A549 (cell line): ENCODE measurements at regions of chr9 and their contacts with region 1.

Region 1: GRCh38 chr9:131349881-131350563 is 43.9 kb upstream of the PRRC2B start:
- DNase-seq: peak; percentile 85 to 86
- ATAC-seq: peak; percentile 97 to 98
- H3K4me3 ChIP-seq: 0 out of 3 replicates have a peak overlapping the region, but pooled peaks have one; percentile 20
- H3K27ac ChIP-seq: peak overlapping the region; percentile 23 to 69; a peak in 4 of 6 replicates
- H3K4me1 ChIP-seq: 0 out of 3 replicates have a peak, but pooled peaks cover 3% of the 10 kb centered on the region
- CTCF ChIP-seq: peak; percentile 84
- EP300 ChIP-seq: no peak
- POLR2A ChIP-seq: no peak
- RAD21 ChIP-seq: peak; percentile 91 to 92

Region 2: DNA sequence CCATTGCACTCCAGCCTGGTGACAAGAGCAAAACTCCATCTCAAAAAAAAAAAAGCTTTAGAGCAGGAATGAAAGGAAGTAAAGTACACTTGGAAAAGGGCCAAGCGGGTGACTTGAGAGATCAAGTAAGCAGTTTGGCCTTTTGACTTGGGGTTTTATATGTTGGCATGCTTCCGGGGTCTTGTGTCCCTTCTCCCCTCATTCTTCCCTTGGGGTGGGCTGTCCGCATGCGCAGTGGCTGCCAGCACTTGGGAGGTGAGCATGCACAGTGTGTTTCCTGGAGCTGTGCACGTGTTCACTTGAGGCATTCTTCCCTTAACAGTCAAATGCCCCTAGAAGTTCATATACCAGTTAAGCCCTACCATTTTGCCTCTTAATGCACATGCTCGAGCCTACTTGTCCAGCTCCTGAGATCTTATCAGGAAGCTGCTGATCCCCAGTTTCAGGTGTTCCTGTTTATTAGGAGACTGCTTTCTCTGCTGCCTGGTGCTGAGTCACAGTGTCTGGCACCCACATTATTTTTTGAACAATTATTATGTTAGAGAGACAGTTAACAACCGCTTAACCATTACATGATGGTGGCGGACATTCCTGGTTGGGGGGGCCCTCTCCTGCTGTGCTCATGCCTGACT is 11.3 kb after region 1 on chr9:
- CTCF ChIA-PET with region 1: interaction called, 33 read pairs
- POLR2A ChIA-PET with region 1: no interaction called
- DNase-seq: peak in 1 of 2 experiments; percentile 48
- ATAC-seq: peak in 1 of 2 experiments; percentile 54; a peak in 3 of 6 replicates
- H3K4me3 ChIP-seq: no peak overlapping the region
- H3K27ac ChIP-seq: peak overlapping the region; percentile 53 to 64
- H3K4me1 ChIP-seq: peaks cover 20% of the 10 kb centered on the region
- CTCF ChIP-seq: no peak
- EP300 ChIP-seq: no peak
- POLR2A ChIP-seq: no peak
- RAD21 ChIP-seq: no peak

Region 3: DNA sequence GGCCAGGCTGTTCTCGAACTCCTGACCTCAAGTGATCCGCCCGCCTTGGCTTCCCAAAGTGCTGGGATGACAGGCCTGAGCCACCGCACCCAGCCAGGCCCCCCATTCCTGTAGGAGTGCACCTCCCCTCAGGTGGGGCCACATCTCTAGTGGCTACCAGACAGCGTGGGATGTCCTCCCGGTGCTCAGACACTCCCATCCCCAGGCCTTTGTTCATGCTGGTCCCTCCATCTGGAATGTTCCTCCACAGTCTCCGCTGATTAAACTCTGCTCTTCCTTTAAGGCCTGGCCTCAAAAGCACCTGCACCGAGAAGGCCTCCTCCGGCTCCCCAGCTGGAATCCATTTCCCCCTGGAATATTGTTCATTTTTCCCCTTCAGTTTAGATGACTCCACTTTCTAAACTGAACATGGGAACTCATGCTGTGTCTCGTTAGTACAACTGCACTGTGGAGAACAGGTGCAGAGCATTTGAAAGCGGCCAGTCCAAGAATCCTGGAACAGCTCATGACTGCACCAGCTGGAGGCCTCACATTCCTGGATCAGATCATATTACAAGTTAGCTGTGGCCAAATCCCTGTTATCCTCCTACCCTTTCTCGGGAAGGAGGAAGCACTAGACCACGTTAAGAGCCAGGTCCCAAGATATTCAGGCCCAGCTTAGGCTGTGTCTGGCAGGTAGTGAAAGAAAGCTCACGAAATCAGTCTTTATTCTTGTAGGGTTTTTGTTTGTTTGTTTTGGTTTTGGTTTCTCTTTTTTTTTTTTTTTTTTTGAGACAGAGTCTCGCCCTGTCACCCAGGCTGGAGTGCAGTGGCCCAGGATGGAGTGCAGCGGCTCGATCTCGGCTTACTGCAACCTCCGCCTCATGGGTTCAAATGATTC is 33.1 kb after region 1 on chr9:
- CTCF ChIA-PET with region 1: interaction called, 39 read pairs
- POLR2A ChIA-PET with region 1: no interaction called
- DNase-seq: peak; percentile 69 to 72
- ATAC-seq: peak; percentile 93 to 94
- H3K4me3 ChIP-seq: no peak overlapping the region
- H3K27ac ChIP-seq: peak overlapping the region; percentile 39 to 75
- H3K4me1 ChIP-seq: peaks cover 14% of the 10 kb centered on the region
- CTCF ChIP-seq: no peak
- EP300 ChIP-seq: no peak
- POLR2A ChIP-seq: no peak
- RAD21 ChIP-seq: no peak

Region 4: DNA sequence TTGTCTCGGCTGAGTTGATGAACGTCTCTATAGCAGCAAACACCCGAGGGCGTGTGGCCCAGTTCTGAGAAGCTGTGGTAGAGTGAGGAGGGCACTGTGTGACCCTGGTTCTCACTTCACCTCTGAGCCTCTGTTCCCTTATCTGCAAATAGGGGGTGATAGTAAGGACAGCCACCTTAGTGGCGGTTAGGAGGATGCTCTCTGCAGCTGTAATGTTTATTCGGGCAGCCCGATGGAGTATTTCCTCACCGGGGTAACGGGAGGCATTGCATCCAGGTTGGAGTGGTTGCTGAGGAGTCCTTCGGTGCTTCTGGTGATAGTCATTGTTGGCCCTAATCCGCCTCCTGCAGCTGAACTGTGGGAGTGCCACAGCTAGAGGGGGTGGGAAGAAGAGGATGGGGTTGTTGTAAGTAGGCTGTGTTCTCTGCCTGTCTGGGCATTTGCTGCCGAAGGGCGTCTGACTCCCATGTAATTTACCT is 57.7 kb after region 1 on chr9:
- CTCF ChIA-PET with region 1: interaction called, 45 read pairs
- POLR2A ChIA-PET with region 1: no interaction called
- DNase-seq: peak in 1 of 2 experiments; percentile 45
- ATAC-seq: peak; percentile 54 to 74
- H3K4me3 ChIP-seq: no peak overlapping the region
- H3K27ac ChIP-seq: no peak overlapping the region; a peak in 1 of 6 replicates
- H3K4me1 ChIP-seq: peaks cover 93% of the 10 kb centered on the region
- CTCF ChIP-seq: no peak
- EP300 ChIP-seq: no peak
- POLR2A ChIP-seq: no peak
- RAD21 ChIP-seq: no peak

Region 5: DNA sequence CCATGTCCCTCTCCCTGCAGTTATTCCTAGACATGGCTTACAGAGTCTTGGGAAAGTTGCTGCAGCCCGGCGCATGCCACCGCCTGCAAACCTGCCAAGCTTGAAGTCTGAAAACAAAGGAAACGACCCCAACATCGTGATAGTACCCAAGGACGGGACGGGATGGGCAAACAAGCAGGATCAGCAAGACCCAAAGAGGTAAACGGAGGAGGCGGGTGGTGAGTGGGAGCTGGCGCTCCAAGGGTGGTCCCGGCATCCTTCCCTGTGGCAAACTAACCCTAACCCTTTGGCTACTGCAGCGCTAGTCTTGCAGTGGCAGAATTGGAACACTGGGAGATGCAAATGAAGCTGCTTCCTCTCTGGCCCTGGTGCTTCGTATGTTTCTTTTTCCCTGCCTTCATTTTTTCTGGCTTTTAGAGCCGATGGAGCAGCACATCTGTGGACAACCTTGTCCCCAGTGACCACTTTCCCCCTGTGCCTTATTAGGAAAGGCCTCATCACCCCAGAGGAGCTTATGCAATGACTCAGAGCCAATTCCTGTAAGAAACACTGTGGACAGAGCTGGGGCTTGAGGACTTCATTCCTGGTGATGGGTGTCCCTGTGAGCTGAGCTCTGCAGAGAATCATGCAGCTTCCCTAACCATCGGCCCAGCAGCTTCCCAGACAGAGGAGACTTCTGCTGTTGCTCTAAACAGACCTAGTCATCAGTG is 82.7 kb after region 1 on chr9:
- CTCF ChIA-PET with region 1: interaction called, 22 read pairs
- POLR2A ChIA-PET with region 1: no interaction called
- DNase-seq: no peak
- ATAC-seq: peak; percentile 39 to 48; a peak in 3 of 6 replicates
- H3K4me3 ChIP-seq: no peak overlapping the region
- H3K27ac ChIP-seq: 0 out of 6 replicates have a peak overlapping the region, but pooled peaks of 1 of the 2 experiments have one; percentile 5
- H3K4me1 ChIP-seq: peaks cover 16% of the 10 kb centered on the region; the same call in 1 of the 3 replicates
- CTCF ChIP-seq: no peak
- EP300 ChIP-seq: no peak
- POLR2A ChIP-seq: no peak
- RAD21 ChIP-seq: no peak

Region 6: GRCh38 chr9:131478421-131478868 is 128.4 kb after region 1 on chr9:
- CTCF ChIA-PET with region 1: interaction called, 48 read pairs
- POLR2A ChIA-PET with region 1: no interaction called
- DNase-seq: peak; percentile 34 to 49
- ATAC-seq: peak in 1 of 2 experiments; percentile 70; a peak in 3 of 6 replicates
- H3K4me3 ChIP-seq: no peak overlapping the region
- H3K27ac ChIP-seq: no peak overlapping the region
- H3K4me1 ChIP-seq: 0 out of 3 replicates have a peak, but pooled peaks cover under 1% of the 10 kb centered on the region
- CTCF ChIP-seq: peak; percentile 73
- EP300 ChIP-seq: no peak
- POLR2A ChIP-seq: no peak
- RAD21 ChIP-seq: peak; percentile 40 to 52